ENCODE measurements at regions of chr17 and their contacts with region 1.

Region 1: GRCh38 chr17:77494664-77495435 is 354.1 kb downstream of the SEC14L1 start:
- DNase-seq: peak; percentile 79
- H3K4me3 ChIP-seq: no peak overlapping the region
- H3K27ac ChIP-seq: no peak overlapping the region
- H3K4me1 ChIP-seq: peaks cover 3% of the 10 kb centered on the region
- H3K27me3 ChIP-seq: no peaks in the 10 kb centered on the region
- CTCF ChIP-seq: peak; percentile 99
- POLR2A ChIP-seq: no peak

Region 2: GRCh38 chr17:77331301-77331864 is 163.5 kb before region 1 on chr17:
- intact Hi-C with region 1: loop called (anchors 2 kb)
- DNase-seq: peak; percentile 89
- H3K4me3 ChIP-seq: no peak overlapping the region
- H3K27ac ChIP-seq: peak overlapping the region; percentile 11 to 32
- H3K4me1 ChIP-seq: no peaks in the 10 kb centered on the region
- H3K27me3 ChIP-seq: no peaks in the 10 kb centered on the region
- CTCF ChIP-seq: peak; percentile 92 to 98 (median 96)
- POLR2A ChIP-seq: no peak

Measured in prostate gland (tissue), 2 donors.